Right ventricle myocardium superior (tissue), 1 donor: ENCODE measurements at regions of chr5 and their contacts with region 1.

Region 1: DNA sequence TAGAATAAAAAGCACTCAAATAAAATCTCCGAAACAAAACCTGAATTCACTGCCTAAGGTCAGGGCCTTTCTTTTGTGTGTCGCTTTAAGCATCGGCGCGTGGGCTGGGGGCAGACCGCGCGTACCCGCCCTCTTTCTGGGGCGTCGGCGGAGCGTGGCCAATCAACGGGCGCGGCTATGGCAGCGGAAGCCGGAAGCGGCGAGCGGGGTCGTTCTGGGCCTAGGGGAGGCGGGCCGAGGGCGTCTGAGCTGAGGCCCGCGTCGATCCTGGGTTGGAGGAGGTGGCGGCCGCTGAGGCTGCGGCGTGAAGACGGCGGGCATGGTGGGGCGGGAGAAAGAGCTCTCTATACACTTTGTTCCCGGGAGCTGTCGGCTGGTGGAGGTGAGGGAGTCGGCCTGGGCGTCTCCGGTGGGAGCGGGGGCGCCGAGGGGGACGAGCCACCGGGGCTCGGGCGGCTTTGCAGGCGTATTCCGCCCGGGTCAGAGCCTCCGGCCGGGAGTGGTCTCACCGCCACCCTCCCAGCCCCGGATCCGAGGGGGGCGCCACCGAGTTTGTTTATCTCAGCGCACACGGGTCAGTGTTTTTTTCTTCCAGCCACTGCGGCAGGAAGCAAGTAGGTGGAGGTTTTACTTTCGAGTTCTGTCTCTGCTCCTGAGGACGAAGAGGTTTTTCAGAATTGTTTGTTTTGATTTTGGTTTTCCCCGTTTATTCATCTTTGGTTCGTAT is at the start of gene MAT2B:
- DNase-seq: peak; percentile 98
- ATAC-seq: peak; percentile 97
- total RNA-seq, gene MAT2B: 60.0 TPM

Region 2: GRCh38 chr5:163135849-163136248 is 369.7 kb before region 1 on chr5:
- intact Hi-C with region 1: no loop called
- DNase-seq: no peak
- ATAC-seq: no peak

Region 3: DNA sequence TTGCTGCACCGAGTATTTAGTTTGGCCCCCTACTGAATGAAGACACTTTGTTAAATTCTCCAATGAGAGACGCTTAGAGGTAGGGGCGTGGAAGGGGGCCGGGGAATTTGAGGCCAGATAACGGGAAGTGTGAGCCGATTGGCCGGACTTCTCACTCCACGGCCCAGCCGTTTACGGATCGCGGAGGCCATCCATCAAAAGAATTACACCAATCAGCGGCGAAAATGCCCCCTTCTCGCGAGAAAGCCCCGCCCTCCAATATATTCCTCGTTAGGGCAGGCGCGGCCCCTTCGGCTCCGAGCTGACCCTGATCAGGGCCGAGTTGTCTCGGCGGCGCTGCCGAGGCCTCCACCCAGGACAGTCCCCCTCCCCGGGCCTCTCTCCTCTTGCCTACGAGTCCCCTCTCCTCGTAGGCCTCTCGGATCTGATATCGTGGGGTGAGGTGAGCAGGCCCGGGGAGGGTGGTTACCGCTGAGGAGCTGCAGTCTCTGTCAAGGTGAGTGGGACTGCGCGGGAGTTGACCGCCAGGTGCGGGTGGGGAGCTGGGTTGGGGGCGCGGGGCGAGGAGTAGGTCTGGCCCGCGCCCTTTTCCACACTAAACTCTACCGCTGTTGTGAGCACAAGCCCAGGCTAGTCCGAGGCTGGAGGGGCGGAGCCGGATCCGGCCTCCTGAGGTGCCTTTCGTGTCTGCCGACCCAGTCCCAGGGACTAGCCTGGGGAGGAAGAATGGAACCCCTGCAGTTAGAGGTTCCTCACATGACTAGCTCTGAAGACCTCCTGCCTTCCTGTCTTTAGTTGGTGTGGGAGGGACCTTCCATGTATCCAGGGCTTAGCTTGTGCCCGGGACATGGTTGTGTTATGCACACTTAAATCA is 68.0 kb before region 1 on chr5 and contains the start of gene CCNG1:
- intact Hi-C with region 1: loop called (anchors 2 kb)
- DNase-seq: peak; percentile 96
- ATAC-seq: peak; percentile 98
- total RNA-seq, gene CCNG1: 86.8 TPM

Region 4: DNA sequence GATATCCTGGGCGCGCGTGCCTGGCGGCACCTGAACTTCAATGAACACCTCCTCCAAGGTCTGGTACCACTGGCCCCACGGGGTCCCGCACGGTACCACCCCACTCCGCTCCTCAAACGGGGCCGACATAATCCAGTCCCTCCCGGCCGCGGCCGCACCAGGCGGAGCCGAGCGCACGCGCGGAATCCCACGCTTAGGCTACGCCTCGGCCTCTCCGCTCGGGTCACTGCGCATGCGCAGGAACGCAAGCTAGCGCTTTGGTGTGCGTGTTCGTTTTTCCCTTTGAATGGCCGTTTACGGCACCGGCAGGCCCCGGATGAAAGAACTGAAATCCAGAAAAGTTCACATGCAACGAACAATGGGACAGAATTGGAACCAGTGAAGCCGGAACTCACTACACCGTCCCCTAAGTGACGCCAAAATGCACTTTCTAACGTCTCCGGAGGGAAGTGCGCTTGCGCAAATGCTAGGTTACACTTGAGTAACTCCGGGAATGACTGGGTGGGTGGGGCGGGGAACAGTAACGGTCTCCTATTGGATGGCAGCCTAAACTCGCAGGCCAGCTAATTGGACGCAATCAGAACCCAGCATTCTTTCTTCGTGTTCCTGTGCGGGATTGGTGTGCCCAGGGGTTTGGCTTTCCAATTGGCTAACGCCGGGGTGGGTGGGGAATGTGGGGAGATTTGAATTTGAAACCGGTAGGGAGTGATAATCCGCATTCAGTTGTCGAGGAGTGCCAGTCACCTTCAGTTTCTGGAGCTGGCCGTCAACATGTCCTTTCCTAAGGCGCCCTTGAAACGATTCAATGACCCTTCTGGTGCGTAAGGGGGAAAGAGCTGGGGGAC is 45.4 kb before region 1 on chr5 and contains the starts of genes HMMR and NUDCD2:
- intact Hi-C with region 1: loop called (anchors 2 kb)
- DNase-seq: peak; percentile 98
- ATAC-seq: peak; percentile 97
- total RNA-seq, gene HMMR: 0.54 TPM
- total RNA-seq, gene NUDCD2: 12.9 TPM